ENCODE measurements at regions of chr7 and their contacts with region 1.

Region 1: GRCh38 chr7:35185907-35186731 is 67.8 kb downstream of the TBX20 start:
- DNase-seq: no peak
- ATAC-seq: no peak
- H3K4me3 ChIP-seq: no peak overlapping the region
- H3K27ac ChIP-seq: no peak overlapping the region
- H3K4me1 ChIP-seq: no peaks in the 10 kb centered on the region
- H3K27me3 ChIP-seq: no peaks in the 10 kb centered on the region; a peak in 2 of 4 replicates
- CTCF ChIP-seq: no peak
- EP300 ChIP-seq: no peak
- POLR2A ChIP-seq: no peak
- RAD21 ChIP-seq: no peak

Region 2: GRCh38 chr7:35519971-35520809 is 334.1 kb after region 1 on chr7:
- CTCF ChIA-PET with region 1: no interaction called
- POLR2A ChIA-PET with region 1: no interaction called
- RAD21 ChIA-PET with region 1: no interaction called
- SMC1A ChIA-PET with region 1: interaction called, 4 read pairs
- in situ Hi-C with region 1: no loop called
- intact Hi-C with region 1: loop called (anchors 5 kb)
- DNase-seq: peak; percentile 4
- ATAC-seq: peak; percentile 93
- H3K4me3 ChIP-seq: no peak overlapping the region
- H3K27ac ChIP-seq: no peak overlapping the region
- H3K4me1 ChIP-seq: no peaks in the 10 kb centered on the region
- H3K27me3 ChIP-seq: peaks cover 0 to 4% of the 10 kb centered on the region in 2 experiments; a peak in 2 of 4 replicates
- CTCF ChIP-seq: peak; percentile 86 to 87 (median 86)
- EP300 ChIP-seq: no peak
- POLR2A ChIP-seq: no peak
- RAD21 ChIP-seq: peak; percentile 81

Region 3: GRCh38 chr7:35537067-35538023 is 351.2 kb after region 1 on chr7:
- CTCF ChIA-PET with region 1: no interaction called
- POLR2A ChIA-PET with region 1: no interaction called
- RAD21 ChIA-PET with region 1: no interaction called
- SMC1A ChIA-PET with region 1: no interaction called
- in situ Hi-C with region 1: no loop called
- intact Hi-C with region 1: loop called (anchors 5 kb)
- DNase-seq: no peak
- ATAC-seq: peak; percentile 100
- H3K4me3 ChIP-seq: no peak overlapping the region
- H3K27ac ChIP-seq: no peak overlapping the region
- H3K4me1 ChIP-seq: no peaks in the 10 kb centered on the region
- H3K27me3 ChIP-seq: no peaks in the 10 kb centered on the region
- CTCF ChIP-seq: peak; percentile 94 to 96 (median 95)
- EP300 ChIP-seq: no peak
- POLR2A ChIP-seq: no peak
- RAD21 ChIP-seq: peak; percentile 76

Measured in GM12878 (cell line).